ENCODE measurements at regions of chr12 and their contacts with region 1.

Region 1: DNA sequence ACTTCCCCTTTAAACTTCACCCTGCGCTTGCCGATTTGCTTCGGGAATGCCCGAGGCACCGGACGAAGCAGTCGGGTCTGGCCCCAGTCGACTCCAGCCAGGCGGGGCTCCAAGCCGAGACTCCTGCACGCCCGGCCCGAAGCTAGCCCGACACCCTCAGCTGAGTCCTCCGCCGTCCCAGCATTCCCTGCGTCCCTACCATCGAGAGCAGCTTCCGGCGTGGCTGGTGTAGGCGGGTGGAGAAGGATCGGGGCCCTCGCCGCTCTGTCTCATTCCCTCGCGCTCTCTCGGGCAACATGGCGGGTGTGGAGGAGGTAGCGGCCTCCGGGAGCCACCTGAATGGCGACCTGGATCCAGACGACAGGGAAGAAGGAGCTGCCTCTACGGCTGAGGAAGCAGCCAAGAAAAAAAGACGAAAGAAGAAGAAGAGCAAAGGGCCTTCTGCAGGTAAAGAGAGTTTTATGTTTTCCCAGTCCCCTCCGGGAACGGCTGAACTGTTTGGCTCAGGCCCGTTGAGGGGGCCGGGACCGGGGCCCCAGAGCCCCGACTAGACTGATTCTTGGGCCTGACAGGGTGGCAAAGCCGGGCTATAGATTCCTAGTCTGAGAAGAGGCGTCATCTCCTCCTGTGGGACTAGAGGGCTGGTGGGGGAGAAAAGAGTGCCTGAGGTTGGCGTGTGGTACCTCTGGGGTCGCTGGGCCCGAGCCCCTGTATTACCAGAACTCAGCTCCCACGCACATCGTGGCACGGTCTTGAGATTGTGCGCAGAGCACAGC is at the start of gene METAP2:
- DNase-seq: peak; percentile 86
- H3K4me3 Mint-ChIP-seq: peak within 1 kb of the TSS; percentile 100
- H3K27ac Mint-ChIP-seq: peak within 1 kb of the TSS; percentile 100
- H3K4me1 Mint-ChIP-seq: peaks cover 46% of the 10 kb centered on the region
- H3K27me3 Mint-ChIP-seq: no peaks in the 10 kb centered on the region
- total RNA-seq, gene METAP2: 118 and 121 TPM in 2 replicates

Region 2: GRCh38 chr12:95003213-95003920 is 470.7 kb before region 1 on chr12 and contains the start of gene NDUFA12:
- intact Hi-C with region 1: loop called (anchors 2 kb)
- DNase-seq: peak; percentile 94
- H3K4me3 Mint-ChIP-seq: peak within 1 kb of the TSS; percentile 95
- H3K27ac Mint-ChIP-seq: peak within 1 kb of the TSS; percentile 93
- H3K4me1 Mint-ChIP-seq: peaks cover 30% of the 10 kb centered on the region
- H3K27me3 Mint-ChIP-seq: no peaks in the 10 kb centered on the region
- total RNA-seq, gene NDUFA12: 113 TPM in 2 replicates

Region 3: DNA sequence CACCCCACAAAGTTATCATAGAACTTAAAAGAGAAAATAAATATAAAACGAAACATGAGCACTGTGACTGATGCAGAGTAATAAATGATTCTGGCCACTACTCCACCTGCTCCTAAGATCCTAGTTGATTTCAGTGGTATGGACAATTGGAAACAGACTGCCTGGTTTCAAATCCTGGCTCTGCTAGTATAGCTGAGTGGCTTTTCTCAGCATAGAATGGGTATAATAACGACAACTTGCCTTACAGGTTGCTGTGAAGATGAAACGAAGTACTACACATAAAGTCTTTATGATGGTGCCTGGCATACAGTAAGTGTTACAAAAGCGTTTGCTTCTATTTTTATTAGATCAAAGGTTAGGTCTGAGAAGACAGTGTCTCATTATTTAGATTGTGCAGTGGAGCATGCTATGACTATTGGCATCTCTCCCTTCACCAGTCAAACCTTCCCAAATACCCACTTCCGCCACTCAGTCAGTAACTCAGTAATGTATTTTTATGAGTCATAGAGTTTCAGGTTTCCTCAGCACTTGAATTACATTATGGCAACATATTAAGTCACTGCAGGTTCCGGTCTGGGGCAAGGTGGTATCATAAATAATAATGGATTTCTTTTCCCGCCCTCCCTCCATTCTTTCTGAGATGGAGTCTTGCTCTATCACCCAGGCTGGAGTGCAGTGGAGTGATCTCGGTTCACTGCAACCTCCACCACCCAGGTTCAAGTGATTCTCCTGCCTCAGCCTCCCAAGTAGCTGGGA is 371.0 kb before region 1 on chr12:
- intact Hi-C with region 1: loop called (anchors 1 kb)
- DNase-seq: peak; percentile 39
- H3K4me3 Mint-ChIP-seq: no peak overlapping the region
- H3K27ac Mint-ChIP-seq: peak overlapping the region; percentile 20
- H3K4me1 Mint-ChIP-seq: peaks cover 10% of the 10 kb centered on the region
- H3K27me3 Mint-ChIP-seq: no peaks in the 10 kb centered on the region

Region 4: GRCh38 chr12:95117178-95117599 is 356.9 kb before region 1 on chr12:
- intact Hi-C with region 1: loop called (anchors 1 kb)
- DNase-seq: peak; percentile 26
- H3K4me3 Mint-ChIP-seq: no peak overlapping the region
- H3K27ac Mint-ChIP-seq: no peak overlapping the region
- H3K4me1 Mint-ChIP-seq: no peaks in the 10 kb centered on the region
- H3K27me3 Mint-ChIP-seq: no peaks in the 10 kb centered on the region

Region 5: DNA sequence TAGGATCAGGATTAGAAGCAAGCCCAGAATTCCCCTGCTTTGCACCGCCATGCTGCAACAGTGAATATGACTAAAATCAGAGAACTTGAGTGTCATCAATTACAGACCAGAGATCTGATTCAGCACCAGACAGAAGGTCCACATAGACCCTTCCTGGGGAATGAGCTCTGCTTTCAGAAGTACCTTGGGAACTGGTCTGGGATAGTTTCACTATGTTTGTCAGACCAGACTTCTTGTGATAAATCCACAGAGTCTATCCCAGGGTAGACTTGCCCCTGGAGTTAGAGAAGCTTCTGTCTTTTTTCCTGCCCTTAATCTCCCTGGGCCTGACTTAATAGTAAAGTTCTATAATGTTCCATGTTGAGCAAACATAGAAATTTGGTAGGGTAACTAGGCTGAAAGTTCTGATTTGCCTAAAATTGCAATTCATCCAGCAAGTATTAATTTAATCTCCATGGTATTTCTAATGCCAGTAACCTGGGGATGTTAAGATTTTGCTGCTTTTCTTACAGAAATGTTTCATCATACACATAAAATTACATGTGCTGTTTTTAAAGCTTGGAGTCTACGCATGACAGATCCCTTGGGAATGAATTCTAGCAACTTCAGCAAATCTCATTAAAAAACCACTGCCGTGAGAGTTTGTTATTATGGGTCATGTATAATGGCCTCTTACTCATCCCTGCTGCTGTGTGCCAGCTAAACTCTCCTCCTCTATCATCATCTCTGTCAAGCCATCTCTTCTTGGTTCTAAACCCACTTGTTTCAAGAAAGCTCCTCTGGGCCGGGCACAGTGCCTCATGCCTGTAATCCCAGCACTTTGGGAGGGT is 61.4 kb before region 1 on chr12:
- intact Hi-C with region 1: no loop called
- DNase-seq: no peak
- H3K4me3 Mint-ChIP-seq: no peak overlapping the region
- H3K27ac Mint-ChIP-seq: no peak overlapping the region
- H3K4me1 Mint-ChIP-seq: no peaks in the 10 kb centered on the region
- H3K27me3 Mint-ChIP-seq: peaks cover 7% of the 10 kb centered on the region

Region 6: GRCh38 chr12:95548539-95549391 is 74.7 kb after region 1 on chr12:
- intact Hi-C with region 1: loop called (anchors 1 kb)
- DNase-seq: peak; percentile 66
- H3K4me3 Mint-ChIP-seq: peak overlapping the region; percentile 91
- H3K27ac Mint-ChIP-seq: peak overlapping the region; percentile 62
- H3K4me1 Mint-ChIP-seq: peaks cover 34% of the 10 kb centered on the region
- H3K27me3 Mint-ChIP-seq: peaks cover 3% of the 10 kb centered on the region

Region 7: GRCh38 chr12:96343347-96343954 is 869.4 kb after region 1 on chr12:
- intact Hi-C with region 1: no loop called
- DNase-seq: peak; percentile 21
- H3K4me3 Mint-ChIP-seq: peak overlapping the region; percentile 24
- H3K27ac Mint-ChIP-seq: peak overlapping the region; percentile 79
- H3K4me1 Mint-ChIP-seq: peaks cover 54% of the 10 kb centered on the region
- H3K27me3 Mint-ChIP-seq: no peaks in the 10 kb centered on the region

Measured in activated T-helper 1 cell treated with anti-CD3 and anti-CD28 coated beads, Interleukin-12 subunit alpha, Interleukin-12 subunit beta, Interleukin-2, Interleukin-4 antibody, amounts not matched to agents 30 ng/mL and 10 ng/mL and 1 ng/mL, durations not matched to agents 14 hours and 24 hours and 36 hours (primary cell).